ENCODE measurements at regions of chr3 and their contacts with region 1.

Region 1: DNA sequence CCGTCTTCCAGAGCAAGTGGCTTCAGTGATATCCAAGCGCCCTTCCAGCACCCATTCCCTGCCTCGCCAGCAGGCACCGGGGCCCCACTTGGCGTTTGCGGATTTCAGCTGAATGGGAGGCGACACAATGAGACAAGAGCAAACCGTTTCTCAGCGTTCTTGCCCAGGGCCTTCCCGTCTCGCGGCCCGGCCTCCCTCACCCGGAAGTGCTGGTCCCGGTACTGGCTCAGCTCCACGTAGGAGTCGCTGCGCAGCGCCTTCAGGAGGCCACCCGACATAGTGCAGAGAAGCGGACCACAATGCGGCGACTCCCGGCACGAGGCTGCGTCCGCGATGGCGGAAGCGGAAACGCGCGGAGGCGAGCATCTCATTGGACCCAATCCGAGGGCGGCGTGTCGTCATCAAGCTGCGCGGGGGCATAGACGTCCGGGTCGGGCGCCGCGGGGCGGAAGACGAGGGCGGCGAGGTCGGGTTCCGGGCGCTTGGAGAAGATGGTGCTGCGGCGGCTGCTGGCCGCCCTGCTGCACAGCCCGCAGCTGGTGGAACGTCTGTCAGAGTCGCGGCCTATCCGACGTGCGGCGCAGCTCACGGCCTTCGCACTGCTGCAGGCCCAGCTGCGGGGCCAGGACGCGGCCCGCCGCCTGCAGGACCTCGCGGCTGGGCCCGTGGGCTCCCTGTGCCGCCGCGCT is at the start of gene NCBP2:
- DNase-seq: peak; percentile 98 to 99 (median 99)
- H3K4me3 ChIP-seq: peak within 1 kb of the TSS; percentile 99
- H3K27ac ChIP-seq: peak within 1 kb of the TSS; percentile 42 to 82
- H3K4me1 ChIP-seq: peaks cover 11% of the 10 kb centered on the region
- H3K27me3 ChIP-seq: no peaks in the 10 kb centered on the region
- CTCF ChIP-seq: peak; percentile 39 to 73 (median 60)
- EP300 ChIP-seq: no peak
- POLR2A ChIP-seq: peak; percentile 61
- total RNA-seq, gene NCBP2: 17.4 to 64.7 (median 45.8) TPM

Region 2: DNA sequence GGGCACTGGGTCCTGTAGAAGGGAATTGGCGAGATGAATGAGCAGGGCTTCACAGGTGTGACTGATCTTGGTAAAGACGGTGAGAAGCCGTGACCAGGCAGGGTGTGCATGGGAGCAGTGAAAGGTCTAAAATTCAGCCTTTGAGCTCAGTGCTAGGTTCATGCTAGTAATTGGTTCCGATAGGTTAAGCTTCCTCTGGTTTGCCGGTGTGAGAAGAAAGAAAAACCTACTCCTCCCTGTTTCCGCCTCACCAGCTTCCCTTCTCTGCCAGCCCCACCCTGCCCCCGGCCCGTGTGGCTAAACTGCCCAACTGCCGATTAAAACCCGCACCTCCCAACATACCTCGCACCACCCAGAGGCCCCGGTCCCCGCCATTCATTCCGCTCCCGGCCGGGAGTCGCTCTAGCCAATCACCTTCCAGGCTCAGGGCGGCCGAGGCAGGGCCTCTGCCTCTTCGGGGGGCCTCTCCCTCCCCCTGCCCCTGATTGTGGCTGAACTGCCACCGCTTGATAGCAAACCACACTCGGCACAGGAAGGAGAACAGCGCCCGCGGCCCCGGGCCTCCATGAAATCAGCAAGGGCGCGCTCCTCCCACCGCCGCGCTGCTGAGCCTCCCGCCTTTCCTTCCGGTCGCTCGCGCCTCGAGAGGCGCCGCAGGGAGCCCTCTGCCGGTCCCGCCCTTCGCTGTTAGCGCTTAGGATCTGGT is 310.2 kb before region 1 on chr3:
- intact Hi-C with region 1: loop called in 1 of 4 experiments (anchors 5 kb)
- DNase-seq: peak; percentile 46 to 78 (median 63)
- H3K4me3 ChIP-seq: peak overlapping the region; percentile 47
- H3K27ac ChIP-seq: peak overlapping the region in 1 of 2 donors; percentile 41
- H3K4me1 ChIP-seq: peaks cover 3% of the 10 kb centered on the region
- H3K27me3 ChIP-seq: no peaks in the 10 kb centered on the region
- CTCF ChIP-seq: no peak
- EP300 ChIP-seq: no peak
- POLR2A ChIP-seq: no peak

Region 3: DNA sequence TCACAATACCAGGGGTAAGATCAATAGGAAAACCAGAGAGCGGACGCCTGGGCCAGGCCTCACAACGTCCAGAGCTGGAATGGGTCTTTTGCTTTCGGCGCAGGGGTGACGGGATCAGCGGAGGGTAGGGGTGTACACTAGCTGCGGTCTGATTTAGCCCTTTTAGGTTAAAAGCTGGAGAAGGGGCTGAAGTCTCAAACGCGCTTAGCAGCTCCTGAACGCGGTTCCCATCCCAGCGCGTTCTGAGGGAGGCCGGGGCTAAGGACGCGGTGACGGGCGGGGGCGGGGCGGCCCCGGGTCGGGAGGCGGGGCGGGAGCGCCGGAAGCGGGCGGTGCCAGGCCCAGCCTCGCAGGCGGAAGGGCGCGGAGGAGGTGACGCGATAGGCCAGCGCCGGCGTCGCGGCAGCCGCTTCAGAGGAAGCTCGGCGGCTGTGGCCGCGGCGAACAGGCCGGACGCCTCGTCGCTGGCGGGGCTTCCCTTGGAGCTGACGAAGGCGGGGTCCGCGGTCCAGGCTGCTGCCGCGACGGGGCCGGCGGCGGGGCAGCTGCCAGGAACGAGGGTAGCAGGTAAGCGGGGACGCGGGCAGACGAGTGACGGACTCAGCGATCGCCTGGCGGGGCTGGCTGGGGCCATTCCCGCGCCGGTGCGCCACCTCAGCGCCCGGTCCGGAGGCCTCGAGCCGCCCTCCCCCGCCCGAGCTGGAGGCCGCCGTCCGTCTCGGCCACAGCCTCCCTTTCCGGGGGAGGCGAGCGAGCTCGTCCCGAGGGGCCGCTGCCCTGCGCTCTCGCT is 74.7 kb before region 1 on chr3 and contains the start of gene SENP5:
- intact Hi-C with region 1: loop called in 1 of 4 experiments (anchors 5 kb)
- DNase-seq: peak; percentile 85 to 94 (median 89)
- H3K4me3 ChIP-seq: peak within 1 kb of the TSS; percentile 97
- H3K27ac ChIP-seq: peak within 1 kb of the TSS; percentile 64 to 87
- H3K4me1 ChIP-seq: peaks cover 6% of the 10 kb centered on the region
- H3K27me3 ChIP-seq: no peaks in the 10 kb centered on the region
- CTCF ChIP-seq: no peak
- EP300 ChIP-seq: no peak
- POLR2A ChIP-seq: peak; percentile 85
- total RNA-seq, gene SENP5: 24.6 to 41.1 (median 28.5) TPM